Natural killer cell (primary cell): ENCODE measurements at regions of chr17 and their contacts with region 1.

Region 1: GRCh38 chr17:82892899-82893565 is 53.2 kb upstream of the ZNF750 start:
- DNase-seq: peak; percentile 76 to 91
- ATAC-seq: peak; percentile 92 to 99 (median 93)
- H3K4me3 ChIP-seq: no peak overlapping the region
- H3K4me3 Mint-ChIP-seq: peak overlapping the region; percentile 68
- H3K27ac ChIP-seq: peak overlapping the region; percentile 61
- H3K27ac Mint-ChIP-seq: peak overlapping the region; percentile 82 to 83
- H3K4me1 ChIP-seq: peaks cover 29% of the 10 kb centered on the region
- H3K4me1 Mint-ChIP-seq: peaks cover 31 to 36% of the 10 kb centered on the region in 2 donors
- H3K27me3 ChIP-seq: no peaks in the 10 kb centered on the region
- H3K27me3 Mint-ChIP-seq: peaks cover 0 to 7% of the 10 kb centered on the region in 2 donors
- CTCF ChIP-seq: no peak

Region 2: DNA sequence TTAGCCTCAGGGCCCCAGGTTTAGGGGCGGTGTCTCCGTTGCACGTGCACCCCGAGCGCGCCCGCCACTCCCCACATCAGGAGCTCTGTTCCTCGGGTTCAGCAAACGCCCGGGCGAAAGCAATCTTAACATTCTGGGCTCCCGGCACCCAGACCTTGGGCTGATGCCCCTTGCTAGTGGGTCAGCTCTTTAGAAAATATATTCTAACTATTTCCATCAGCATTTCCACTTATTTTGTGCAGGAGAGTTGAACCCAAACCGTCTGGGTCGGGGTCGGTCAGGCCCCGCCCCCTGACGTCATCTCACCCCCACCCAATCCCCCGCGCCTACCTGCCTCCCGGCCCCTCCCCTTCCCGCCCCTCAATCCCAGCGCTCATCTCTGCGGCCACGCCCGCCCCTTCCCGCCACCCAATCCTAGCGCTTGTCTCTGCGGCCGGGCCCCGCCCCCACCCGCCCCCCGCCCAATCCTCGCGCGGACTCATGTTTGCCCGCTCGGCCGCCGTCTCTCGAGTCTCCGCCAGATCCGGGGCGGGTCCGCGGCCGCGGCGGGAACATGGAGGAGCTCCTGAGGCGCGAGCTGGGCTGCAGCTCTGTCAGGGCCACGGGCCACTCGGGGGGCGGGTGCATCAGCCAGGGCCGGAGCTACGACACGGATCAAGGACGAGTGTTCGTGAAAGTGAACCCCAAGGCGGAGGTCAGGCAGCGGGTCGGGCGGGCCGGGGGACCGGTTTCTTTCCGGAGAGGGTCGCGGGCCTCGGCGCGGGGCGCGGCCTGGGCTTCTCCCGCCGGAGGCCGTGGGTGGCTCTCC is 176.6 kb before region 1 on chr17 and contains the start of gene FN3KRP:
- intact Hi-C with region 1: no loop called
- DNase-seq: peak; percentile 86 to 98
- ATAC-seq: peak; percentile 91 to 92 (median 91)
- H3K4me3 ChIP-seq: peak within 1 kb of the TSS; percentile 77
- H3K4me3 Mint-ChIP-seq: peak within 1 kb of the TSS; percentile 95
- H3K27ac ChIP-seq: peak within 1 kb of the TSS; percentile 48
- H3K27ac Mint-ChIP-seq: peak within 1 kb of the TSS; percentile 77 to 90
- H3K4me1 ChIP-seq: peaks cover 21% of the 10 kb centered on the region
- H3K4me1 Mint-ChIP-seq: peaks cover 14 to 31% of the 10 kb centered on the region in 2 donors
- H3K27me3 ChIP-seq: no peaks in the 10 kb centered on the region
- H3K27me3 Mint-ChIP-seq: no peaks in the 10 kb centered on the region
- CTCF ChIP-seq: no peak
- total RNA-seq, gene FN3KRP: 29.4 to 42.3 (median 32.0) TPM

Region 3: DNA sequence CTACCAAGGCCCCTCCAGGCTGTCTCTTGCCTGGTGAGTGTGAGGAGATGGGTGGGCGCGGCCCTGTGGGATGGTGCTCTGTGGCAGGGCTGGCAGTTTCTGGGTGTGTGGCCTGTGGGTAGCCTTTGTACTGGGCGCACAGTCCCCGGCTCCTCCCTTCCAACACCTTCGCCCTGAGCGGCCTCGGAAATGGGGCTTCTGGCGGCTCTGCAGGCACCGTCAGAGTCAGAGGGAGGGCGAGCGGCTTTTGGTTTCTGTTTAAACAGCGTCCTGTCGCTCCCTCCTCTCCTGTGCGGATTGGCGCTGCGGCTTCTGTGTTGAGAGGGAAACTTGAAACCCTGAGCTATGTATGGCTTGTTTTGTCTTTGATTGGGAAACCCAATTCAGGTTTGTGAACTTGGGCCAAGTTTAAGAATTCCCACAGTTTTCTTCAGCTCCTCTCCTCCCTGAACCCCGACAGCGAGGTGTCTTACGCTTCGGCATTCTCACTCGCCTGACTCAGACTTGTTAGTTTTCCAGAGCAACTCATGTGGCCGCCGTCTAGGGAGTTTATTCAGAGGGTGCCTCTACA is 44.9 kb before region 1 on chr17:
- intact Hi-C with region 1: loop called (anchors 1 kb)
- DNase-seq: peak; percentile 74 to 75
- ATAC-seq: peak; percentile 94 to 98 (median 95)
- H3K4me3 ChIP-seq: peak overlapping the region; percentile 31
- H3K4me3 Mint-ChIP-seq: peak overlapping the region; percentile 83
- H3K27ac ChIP-seq: peak overlapping the region; percentile 75
- H3K27ac Mint-ChIP-seq: peak overlapping the region; percentile 88 to 92
- H3K4me1 ChIP-seq: peaks cover 24% of the 10 kb centered on the region
- H3K4me1 Mint-ChIP-seq: peaks cover 19 to 32% of the 10 kb centered on the region in 2 donors
- H3K27me3 ChIP-seq: no peaks in the 10 kb centered on the region
- H3K27me3 Mint-ChIP-seq: no peaks in the 10 kb centered on the region
- CTCF ChIP-seq: no peak